ENCODE measurements at regions of chr4 and their contacts with region 1.

Region 1: DNA sequence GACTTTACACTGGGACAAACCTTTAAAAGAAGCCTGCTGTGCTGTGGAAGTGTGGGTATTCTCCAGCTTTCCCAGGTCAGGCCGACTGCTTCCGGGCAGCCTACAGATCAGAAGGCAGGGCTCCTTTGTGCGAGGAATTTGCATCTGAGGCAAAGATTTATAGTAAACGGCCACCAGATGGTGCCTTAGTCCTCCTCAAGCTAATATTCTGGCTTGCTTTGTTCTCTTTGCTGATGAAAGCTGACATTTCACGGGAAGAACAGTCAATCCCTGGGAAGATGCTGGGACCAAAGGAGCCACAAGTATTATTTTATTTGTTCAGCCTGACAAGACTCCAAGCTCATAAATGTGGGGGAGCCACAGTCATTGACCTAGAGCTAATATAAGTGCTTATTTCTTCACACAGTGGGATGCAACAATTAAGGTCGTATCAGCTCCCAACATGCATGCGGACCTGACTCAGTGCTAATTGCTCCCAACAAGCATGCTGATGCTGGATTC is 120.7 kb upstream of the TRIM2 start:
- DNase-seq: peak; percentile 46
- ATAC-seq: peak; percentile 52
- H3K4me3 Mint-ChIP-seq: peak overlapping the region; percentile 66
- H3K27ac Mint-ChIP-seq: peak overlapping the region; percentile 72
- H3K4me1 Mint-ChIP-seq: peaks cover 55% of the 10 kb centered on the region
- H3K27me3 Mint-ChIP-seq: peaks cover 17% of the 10 kb centered on the region

Region 2: DNA sequence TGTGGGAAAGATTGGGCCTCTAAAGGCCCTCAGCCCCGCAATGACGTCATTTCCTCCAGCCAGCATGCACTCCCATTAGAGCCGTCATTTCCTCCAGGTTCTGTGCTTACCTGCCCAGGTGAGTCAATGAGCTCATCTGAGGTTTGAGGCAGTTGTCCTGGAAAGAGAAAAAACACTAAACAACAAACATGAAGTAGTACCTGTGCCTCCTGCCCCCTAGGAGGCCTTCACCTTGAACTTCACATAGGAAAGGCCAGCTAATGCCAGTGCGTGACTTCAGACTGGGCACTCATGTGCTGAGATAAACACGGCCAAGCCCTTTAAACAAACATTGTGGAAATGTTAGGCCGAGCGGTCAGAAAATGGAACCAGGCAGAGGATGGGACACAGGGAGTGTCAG is 91.5 kb before region 1 on chr4:
- POLR2A ChIA-PET with region 1: no interaction called
- DNase-seq: no peak
- ATAC-seq: no peak
- H3K4me3 Mint-ChIP-seq: no peak overlapping the region
- H3K27ac Mint-ChIP-seq: no peak overlapping the region
- H3K4me1 Mint-ChIP-seq: no peaks in the 10 kb centered on the region
- H3K27me3 Mint-ChIP-seq: peaks cover 5% of the 10 kb centered on the region

Region 3: GRCh38 chr4:153115322-153116290 is 32.1 kb after region 1 on chr4:
- POLR2A ChIA-PET with region 1: interaction called, 14 read pairs
- DNase-seq: peak; percentile 60
- ATAC-seq: peak; percentile 55
- H3K4me3 Mint-ChIP-seq: peak overlapping the region; percentile 65
- H3K27ac Mint-ChIP-seq: no peak overlapping the region
- H3K4me1 Mint-ChIP-seq: peaks cover 18% of the 10 kb centered on the region
- H3K27me3 Mint-ChIP-seq: peaks cover 4% of the 10 kb centered on the region

Region 4: GRCh38 chr4:153127760-153128494 is 44.4 kb after region 1 on chr4:
- POLR2A ChIA-PET with region 1: interaction called, 14 read pairs
- DNase-seq: peak; percentile 74
- ATAC-seq: peak; percentile 89
- H3K4me3 Mint-ChIP-seq: no peak overlapping the region
- H3K27ac Mint-ChIP-seq: no peak overlapping the region
- H3K4me1 Mint-ChIP-seq: peaks cover 4% of the 10 kb centered on the region
- H3K27me3 Mint-ChIP-seq: peaks cover 26% of the 10 kb centered on the region